ENCODE measurements at regions of chr1 and their contacts with region 1.

Region 1: DNA sequence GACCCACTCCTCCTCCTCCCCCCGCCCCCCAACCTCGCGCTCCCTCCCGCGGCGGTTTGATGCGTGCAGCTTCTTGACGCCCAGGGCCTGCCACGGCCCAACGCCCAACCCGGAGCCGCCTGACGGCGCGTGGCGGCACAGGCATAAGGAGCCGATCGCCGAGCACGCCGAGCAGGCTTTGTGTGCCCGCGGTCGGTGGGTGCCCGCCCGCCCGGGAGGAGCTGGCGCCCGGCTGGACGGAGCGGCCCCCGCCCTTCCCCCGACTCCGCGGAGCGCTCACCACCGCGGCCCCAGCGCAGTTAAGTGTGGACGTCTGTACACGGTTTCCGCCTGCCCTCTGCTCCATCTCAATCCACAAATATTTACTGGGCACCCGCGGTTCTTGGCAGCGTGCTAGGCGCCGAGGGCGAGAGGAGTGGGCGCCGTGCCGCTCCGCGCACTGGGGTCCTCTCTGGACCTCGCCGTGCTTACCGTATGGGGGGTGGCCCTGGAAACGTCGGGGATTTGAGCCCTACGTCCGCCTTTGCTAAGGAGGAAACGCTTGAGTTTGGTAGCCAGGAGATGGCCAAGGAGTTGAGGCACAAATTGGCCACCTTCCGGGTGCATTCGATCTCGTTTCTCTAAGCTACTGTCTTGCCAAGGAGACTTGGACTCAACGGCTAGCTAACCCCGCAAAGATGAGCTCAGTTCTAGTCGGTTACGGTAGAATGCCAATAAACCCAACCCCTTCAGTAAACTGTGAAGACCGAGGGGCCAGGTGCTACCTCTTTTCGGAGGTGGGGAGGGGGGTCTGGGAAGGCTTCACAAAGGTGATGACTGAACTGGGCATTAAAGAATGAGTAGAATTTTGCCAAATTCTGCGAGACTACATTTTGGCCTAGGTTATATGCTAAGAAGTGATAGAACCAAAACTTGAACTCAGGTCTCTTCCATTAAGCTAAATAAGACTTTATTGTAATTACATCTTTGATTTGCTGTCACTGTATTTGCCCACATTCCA is 583 bp upstream of the HDGF start:
- DNase-seq: peak; percentile 93
- ATAC-seq: peak; percentile 84
- H3K4me3 Mint-ChIP-seq: peak overlapping the region; percentile 91
- H3K27ac Mint-ChIP-seq: peak overlapping the region; percentile 92
- H3K4me1 Mint-ChIP-seq: peaks cover 39% of the 10 kb centered on the region
- H3K27me3 Mint-ChIP-seq: no peaks in the 10 kb centered on the region

Region 2: GRCh38 chr1:156664767-156665411 is 87.2 kb before region 1 on chr1:
- POLR2A ChIA-PET with region 1: no interaction called
- DNase-seq: no peak
- ATAC-seq: no peak
- H3K4me3 Mint-ChIP-seq: no peak overlapping the region
- H3K27ac Mint-ChIP-seq: no peak overlapping the region
- H3K4me1 Mint-ChIP-seq: peaks cover 36% of the 10 kb centered on the region
- H3K27me3 Mint-ChIP-seq: peaks cover 21% of the 10 kb centered on the region

Region 3: DNA sequence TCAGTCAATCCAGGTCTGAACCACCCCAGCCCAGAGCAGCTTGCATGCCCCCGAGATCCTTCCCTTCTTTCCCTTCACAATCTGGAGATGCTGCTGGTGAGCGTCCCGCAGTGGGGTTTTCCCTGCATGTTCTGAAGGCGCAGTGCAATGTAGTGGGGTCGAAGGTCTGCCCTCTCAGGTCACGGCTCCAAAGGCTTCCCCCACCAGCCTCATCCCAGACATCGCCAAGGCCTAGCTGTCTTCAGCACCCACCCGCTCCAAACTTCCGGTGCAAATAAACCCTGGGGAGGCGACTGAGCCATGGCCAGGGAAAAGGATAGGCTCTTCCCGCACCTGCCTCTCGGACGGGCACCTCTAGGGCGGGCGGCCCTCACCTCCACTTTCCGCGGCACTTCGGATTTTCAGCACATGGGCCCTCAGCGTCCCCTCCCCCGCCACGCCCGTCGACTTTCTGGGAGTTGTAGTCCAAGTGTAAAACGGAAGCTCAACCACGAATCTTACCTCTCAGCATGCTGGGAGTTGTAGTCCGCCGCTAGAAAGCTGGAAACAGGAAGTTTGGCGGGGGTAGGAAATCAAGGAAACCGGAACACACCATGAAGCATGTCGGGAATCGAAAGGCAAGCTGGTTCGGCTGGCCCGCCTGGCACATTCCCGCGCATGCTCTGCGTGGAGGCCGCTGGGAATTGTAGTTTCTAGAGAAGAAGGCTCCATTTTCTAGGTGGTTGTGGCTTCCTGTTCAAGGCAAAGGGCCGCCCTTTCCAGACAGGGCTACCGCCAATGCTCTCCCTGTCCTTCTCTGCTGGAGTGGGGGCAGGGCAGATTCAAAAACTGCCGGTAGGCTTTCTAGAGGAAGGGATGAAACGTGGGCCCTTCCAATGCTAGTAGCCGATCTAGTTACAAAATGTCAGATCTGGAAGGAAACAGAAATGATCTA is 11.1 kb before region 1 on chr1 and contains the start of gene MRPL24:
- POLR2A ChIA-PET with region 1: interaction called, 69 read pairs
- DNase-seq: peak; percentile 88
- ATAC-seq: peak; percentile 88
- H3K4me3 Mint-ChIP-seq: peak within 1 kb of the TSS; percentile 94
- H3K27ac Mint-ChIP-seq: peak within 1 kb of the TSS; percentile 94
- H3K4me1 Mint-ChIP-seq: peaks cover 29% of the 10 kb centered on the region
- H3K27me3 Mint-ChIP-seq: no peaks in the 10 kb centered on the region
- total RNA-seq, gene MRPL24: 45.0 to 51.1 TPM

Region 4: GRCh38 chr1:156767101-156767878 is 15.2 kb after region 1 on chr1 and contains the start of gene PRCC:
- POLR2A ChIA-PET with region 1: interaction called, 67 read pairs
- DNase-seq: peak; percentile 89
- ATAC-seq: peak; percentile 96
- H3K4me3 Mint-ChIP-seq: no peak within 1 kb of the TSS
- H3K27ac Mint-ChIP-seq: no peak within 1 kb of the TSS
- H3K4me1 Mint-ChIP-seq: peaks cover 34% of the 10 kb centered on the region
- H3K27me3 Mint-ChIP-seq: no peaks in the 10 kb centered on the region
- total RNA-seq, gene PRCC: 65.7 to 76.0 TPM